Left ventricle myocardium superior (tissue), 1 donor: ENCODE measurements at regions of chr15 and their contacts with region 1.

Region 1: DNA sequence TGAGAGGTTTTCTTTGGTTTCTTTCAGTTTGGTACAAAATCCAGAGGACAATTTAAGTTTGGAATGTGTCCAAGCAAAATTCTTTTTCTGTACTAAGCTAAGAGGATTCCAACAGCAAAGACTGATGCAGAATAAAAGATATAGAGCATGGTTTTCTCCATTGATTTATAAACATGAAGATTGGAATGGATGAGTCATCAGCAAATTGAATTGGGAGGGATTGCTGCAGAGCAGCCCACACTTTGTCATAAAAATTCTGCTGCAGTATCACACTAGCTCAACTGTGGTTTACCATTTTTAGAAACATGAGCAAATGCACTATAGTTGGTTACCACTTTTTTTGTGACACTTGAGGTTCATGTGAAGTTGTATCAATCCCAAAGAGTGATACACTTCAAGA is 16.1 kb upstream of the LARP6 start:
- DNase-seq: no peak
- ATAC-seq: peak; percentile 16

Region 2: GRCh38 chr15:70826634-70827033 is 43.4 kb before region 1 on chr15:
- intact Hi-C with region 1: loop called (anchors 5 kb)
- DNase-seq: peak; percentile 40
- ATAC-seq: peak; percentile 68